Aorta (tissue), 5 donors: ENCODE measurements at regions of chr9 and their contacts with region 1.

Region 1: DNA sequence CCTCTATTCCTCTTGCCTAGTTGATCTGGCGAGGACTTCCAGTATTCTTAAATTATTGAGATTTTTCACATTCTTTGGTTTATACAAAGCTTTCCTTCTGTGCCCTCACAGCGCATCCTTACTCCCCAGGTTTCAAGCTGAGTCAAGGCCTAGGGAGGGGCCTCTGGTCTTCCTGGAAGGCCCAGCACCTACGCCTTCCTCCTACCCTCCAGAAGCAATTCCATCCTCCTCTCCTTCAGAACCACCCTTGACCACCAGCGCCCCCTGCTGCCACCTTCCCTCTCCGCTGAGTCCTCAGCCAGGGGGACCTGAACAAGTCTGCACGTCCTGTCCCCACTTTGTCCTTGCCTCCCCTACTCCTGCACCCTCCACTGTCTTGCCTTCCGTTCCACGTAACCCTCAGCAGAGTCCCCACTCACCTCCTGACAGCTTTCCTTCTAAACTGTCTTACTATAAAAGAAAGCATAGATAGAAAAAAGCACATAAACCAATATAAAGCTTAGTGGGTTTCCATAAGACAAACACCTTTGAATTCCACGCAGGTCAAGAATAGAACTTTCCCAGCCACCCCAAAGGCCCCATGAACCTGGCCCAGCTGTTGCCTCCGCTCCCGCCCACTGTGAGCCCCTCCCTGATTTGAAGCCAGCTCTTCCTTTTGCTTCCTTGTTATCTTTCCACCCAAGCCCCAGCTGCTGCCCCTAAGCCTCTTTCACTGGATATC is 63.0 kb upstream of the CTSL start:
- DNase-seq: peak; percentile 81 to 93
- ATAC-seq: peak; percentile 72
- H3K4me3 ChIP-seq: no peak overlapping the region
- H3K27ac ChIP-seq: no peak overlapping the region
- H3K4me1 ChIP-seq: no peaks in the 10 kb centered on the region
- H3K27me3 ChIP-seq: no peaks in the 10 kb centered on the region

Region 2: GRCh38 chr9:86434039-86434726 is 1228.8 kb before region 1 on chr9:
- intact Hi-C with region 1: loop called in 1 of 2 experiments (anchors 10 kb)
- DNase-seq: peak in 1 of 2 donors; percentile 66
- ATAC-seq: peak; percentile 79
- H3K4me3 ChIP-seq: no peak overlapping the region
- H3K27ac ChIP-seq: no peak overlapping the region
- H3K4me1 ChIP-seq: no peaks in the 10 kb centered on the region
- H3K27me3 ChIP-seq: no peaks in the 10 kb centered on the region

Region 3: GRCh38 chr9:87336914-87337333 is 326.0 kb before region 1 on chr9:
- intact Hi-C with region 1: loop called (anchors 2 to 5 kb)
- DNase-seq: no peak
- ATAC-seq: peak; percentile 81
- H3K4me3 ChIP-seq: peak overlapping the region; percentile 51 to 88
- H3K27ac ChIP-seq: no peak overlapping the region
- H3K4me1 ChIP-seq: no peaks in the 10 kb centered on the region
- H3K27me3 ChIP-seq: no peaks in the 10 kb centered on the region

Region 4: GRCh38 chr9:87445646-87446045 is 217.3 kb before region 1 on chr9:
- intact Hi-C with region 1: no loop called
- DNase-seq: peak in 1 of 2 donors; percentile 49
- ATAC-seq: no peak
- H3K4me3 ChIP-seq: no peak overlapping the region
- H3K27ac ChIP-seq: no peak overlapping the region
- H3K4me1 ChIP-seq: no peaks in the 10 kb centered on the region
- H3K27me3 ChIP-seq: no peaks in the 10 kb centered on the region

Region 5: DNA sequence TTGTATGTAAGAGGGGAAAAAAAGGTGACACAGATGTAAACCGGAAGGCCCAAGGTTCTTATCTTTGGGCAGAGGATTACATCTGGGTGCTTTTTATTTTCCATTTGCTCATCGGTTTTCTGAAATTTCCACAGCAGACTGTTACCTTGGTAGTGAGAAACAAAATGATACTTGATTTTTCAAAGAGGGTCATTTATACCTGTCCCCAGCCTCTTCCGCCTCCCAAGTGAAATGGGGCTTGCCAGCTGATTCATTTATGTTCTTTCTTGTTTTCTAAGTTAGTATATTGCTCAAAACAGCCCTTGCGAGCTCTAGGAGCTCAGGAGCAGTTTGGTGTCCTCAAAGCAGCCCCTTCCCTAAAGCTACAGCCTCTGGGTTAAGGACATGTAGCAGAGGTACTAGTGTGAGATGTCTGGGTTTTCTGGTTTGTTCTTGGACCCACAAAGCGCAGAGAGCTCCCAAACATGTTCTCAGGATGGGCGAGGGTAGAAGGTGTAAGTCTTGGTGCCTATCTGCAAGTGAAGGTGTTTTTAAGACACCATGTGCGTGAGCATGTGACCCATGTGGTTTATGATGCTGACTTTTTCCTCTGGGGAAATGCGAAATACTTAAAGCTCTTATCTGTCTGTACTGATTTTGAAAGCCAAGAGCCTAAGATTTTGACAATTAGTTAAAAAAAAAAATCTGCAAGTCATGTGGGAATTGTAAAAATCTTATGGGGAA is 127.0 kb before region 1 on chr9:
- intact Hi-C with region 1: no loop called
- DNase-seq: no peak
- ATAC-seq: no peak
- H3K4me3 ChIP-seq: no peak overlapping the region
- H3K27ac ChIP-seq: no peak overlapping the region
- H3K4me1 ChIP-seq: no peaks in the 10 kb centered on the region
- H3K27me3 ChIP-seq: no peaks in the 10 kb centered on the region

Region 6: GRCh38 chr9:87592554-87593358 is 70.2 kb before region 1 on chr9:
- intact Hi-C with region 1: no loop called
- DNase-seq: peak; percentile 75 to 84
- ATAC-seq: peak; percentile 78
- H3K4me3 ChIP-seq: no peak overlapping the region
- H3K27ac ChIP-seq: no peak overlapping the region
- H3K4me1 ChIP-seq: no peaks in the 10 kb centered on the region
- H3K27me3 ChIP-seq: no peaks in the 10 kb centered on the region